GM12878 (cell line): ENCODE measurements at regions of chr12 and their contacts with region 1.

Region 1: GRCh38 chr12:66693901-66694675 is 15.2 kb upstream of the GRIP1 start:
- DNase-seq: peak; percentile 23
- ATAC-seq: peak; percentile 97
- H3K4me3 ChIP-seq: no peak overlapping the region
- H3K27ac ChIP-seq: no peak overlapping the region
- H3K4me1 ChIP-seq: peaks cover 5% of the 10 kb centered on the region; the same call in 1 of the 2 replicates
- H3K27me3 ChIP-seq: no peaks in the 10 kb centered on the region
- CTCF ChIP-seq: peak; percentile 54 to 67 (median 61); a peak in 5 of 6 replicates
- EP300 ChIP-seq: no peak
- POLR2A ChIP-seq: no peak
- RAD21 ChIP-seq: peak; percentile 93

Region 2: DNA sequence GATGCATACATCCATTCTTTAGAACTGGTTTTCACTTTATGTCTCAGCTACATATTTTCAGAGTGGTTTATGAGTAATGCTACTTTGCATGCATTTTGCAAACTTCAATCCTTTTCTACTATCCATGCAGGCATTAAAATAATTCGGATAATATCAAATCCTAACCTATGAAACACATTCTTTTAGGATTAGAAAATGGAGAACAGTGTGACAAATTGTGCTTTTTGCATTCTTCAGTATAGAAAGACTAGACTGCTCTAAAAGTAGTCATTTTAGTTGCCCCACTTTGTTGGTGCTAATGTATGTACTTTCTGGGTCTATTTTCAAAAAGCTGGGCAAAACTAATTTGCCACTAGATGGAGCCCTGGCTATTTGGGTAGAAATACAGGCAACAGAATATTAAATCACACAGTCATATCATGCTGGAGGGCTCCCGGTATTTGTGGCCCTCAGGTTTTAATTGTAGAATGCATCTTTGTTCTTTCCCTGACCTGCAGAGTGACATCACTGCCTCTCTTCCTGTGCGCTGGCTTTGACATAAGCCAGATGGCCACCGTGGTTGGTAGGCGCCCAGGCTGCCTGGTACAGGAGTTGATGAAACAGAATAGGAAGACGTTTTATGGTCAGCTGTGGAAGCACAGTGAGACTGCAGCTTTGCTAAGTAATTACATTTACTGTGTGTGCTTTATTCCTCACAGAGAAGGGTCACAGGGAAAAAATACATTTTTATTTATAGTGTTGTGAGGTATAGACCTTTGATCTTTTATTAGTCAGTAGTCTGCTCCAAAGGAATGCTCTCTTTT is 1387.5 kb before region 1 on chr12:
- CTCF ChIA-PET with region 1: interaction called, 3 read pairs
- POLR2A ChIA-PET with region 1: no interaction called
- RAD21 ChIA-PET with region 1: no interaction called
- SMC1A ChIA-PET with region 1: no interaction called
- in situ Hi-C with region 1: no loop called
- intact Hi-C with region 1: loop called (anchors 10 kb)
- DNase-seq: no peak
- ATAC-seq: peak; percentile 76
- H3K4me3 ChIP-seq: no peak overlapping the region
- H3K27ac ChIP-seq: no peak overlapping the region
- H3K4me1 ChIP-seq: no peaks in the 10 kb centered on the region
- H3K27me3 ChIP-seq: no peaks in the 10 kb centered on the region
- CTCF ChIP-seq: peak; percentile 46 to 60 (median 56)
- EP300 ChIP-seq: no peak
- POLR2A ChIP-seq: no peak
- RAD21 ChIP-seq: peak; percentile 70

Region 3: GRCh38 chr12:66144791-66145754 is 549.0 kb before region 1 on chr12:
- CTCF ChIA-PET with region 1: interaction called, 4 read pairs
- POLR2A ChIA-PET with region 1: no interaction called
- RAD21 ChIA-PET with region 1: no interaction called
- SMC1A ChIA-PET with region 1: interaction called, 9 read pairs
- in situ Hi-C with region 1: no loop called
- intact Hi-C with region 1: loop called (anchors 1 kb)
- DNase-seq: no peak
- ATAC-seq: peak; percentile 64
- H3K4me3 ChIP-seq: no peak overlapping the region
- H3K27ac ChIP-seq: no peak overlapping the region
- H3K4me1 ChIP-seq: no peaks in the 10 kb centered on the region
- H3K27me3 ChIP-seq: no peaks in the 10 kb centered on the region
- CTCF ChIP-seq: peak; percentile 9 to 59 (median 17); a peak in 2 of 6 replicates
- EP300 ChIP-seq: no peak
- POLR2A ChIP-seq: no peak
- RAD21 ChIP-seq: 0 out of 2 replicates have a peak, but pooled peaks have one; percentile 30

Region 4: GRCh38 chr12:66269757-66270383 is 424.2 kb before region 1 on chr12:
- CTCF ChIA-PET with region 1: interaction called, 26 read pairs
- POLR2A ChIA-PET with region 1: no interaction called
- RAD21 ChIA-PET with region 1: interaction called, 11 read pairs
- SMC1A ChIA-PET with region 1: interaction called, 14 read pairs
- in situ Hi-C with region 1: no loop called
- intact Hi-C with region 1: loop called (anchors 5 kb)
- DNase-seq: peak; percentile 5
- ATAC-seq: peak; percentile 80
- H3K4me3 ChIP-seq: no peak overlapping the region
- H3K27ac ChIP-seq: no peak overlapping the region
- H3K4me1 ChIP-seq: peaks cover 12% of the 10 kb centered on the region
- H3K27me3 ChIP-seq: no peaks in the 10 kb centered on the region
- CTCF ChIP-seq: peak; percentile 46 to 59 (median 53); a peak in 5 of 6 replicates
- EP300 ChIP-seq: no peak
- POLR2A ChIP-seq: no peak
- RAD21 ChIP-seq: peak; percentile 73

Region 5: DNA sequence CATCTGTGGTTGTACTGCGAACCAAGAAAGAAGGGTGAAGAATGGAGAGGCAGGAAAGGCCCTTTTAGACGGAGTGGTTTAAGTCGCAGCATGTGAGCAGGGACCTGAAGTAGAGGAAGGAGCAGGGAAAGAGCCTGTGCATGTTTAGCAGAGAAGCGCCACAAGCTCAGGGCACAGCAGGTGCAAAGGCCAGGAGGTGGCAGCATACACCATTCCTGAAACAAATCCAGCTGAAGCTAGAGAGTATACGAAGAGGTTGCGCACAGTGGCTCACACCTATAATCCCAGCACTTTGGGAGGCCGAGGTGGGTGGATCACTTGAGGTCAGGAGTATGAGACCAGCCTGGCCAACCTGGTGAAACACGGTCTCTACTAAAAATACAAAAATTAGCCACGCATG is 341.9 kb before region 1 on chr12:
- CTCF ChIA-PET with region 1: no interaction called
- POLR2A ChIA-PET with region 1: no interaction called
- RAD21 ChIA-PET with region 1: no interaction called
- SMC1A ChIA-PET with region 1: interaction called, 3 read pairs
- in situ Hi-C with region 1: no loop called
- intact Hi-C with region 1: loop called (anchors 2 kb)
- DNase-seq: no peak
- ATAC-seq: peak; percentile 45; the same call in 2 of the 3 replicates
- H3K4me3 ChIP-seq: no peak overlapping the region
- H3K27ac ChIP-seq: no peak overlapping the region
- H3K4me1 ChIP-seq: no peaks in the 10 kb centered on the region
- H3K27me3 ChIP-seq: no peaks in the 10 kb centered on the region
- CTCF ChIP-seq: peak; percentile 29 to 36 (median 31); a peak in 2 of 6 replicates
- EP300 ChIP-seq: no peak
- POLR2A ChIP-seq: no peak
- RAD21 ChIP-seq: peak; percentile 68

Region 6: GRCh38 chr12:66679461-66680084 is 14.5 kb before region 1 on chr12:
- CTCF ChIA-PET with region 1: interaction called, 42 read pairs
- POLR2A ChIA-PET with region 1: no interaction called
- RAD21 ChIA-PET with region 1: no interaction called
- SMC1A ChIA-PET with region 1: interaction called, 4 read pairs
- in situ Hi-C with region 1: no loop called
- intact Hi-C with region 1: no loop called
- DNase-seq: no peak
- ATAC-seq: no peak
- H3K4me3 ChIP-seq: no peak overlapping the region
- H3K27ac ChIP-seq: no peak overlapping the region
- H3K4me1 ChIP-seq: peaks cover 3% of the 10 kb centered on the region; the same call in 1 of the 2 replicates
- H3K27me3 ChIP-seq: no peaks in the 10 kb centered on the region
- CTCF ChIP-seq: no peak
- EP300 ChIP-seq: no peak
- POLR2A ChIP-seq: no peak
- RAD21 ChIP-seq: no peak